ENCODE measurements at regions of chr10 and their contacts with region 1.

Region 1: DNA sequence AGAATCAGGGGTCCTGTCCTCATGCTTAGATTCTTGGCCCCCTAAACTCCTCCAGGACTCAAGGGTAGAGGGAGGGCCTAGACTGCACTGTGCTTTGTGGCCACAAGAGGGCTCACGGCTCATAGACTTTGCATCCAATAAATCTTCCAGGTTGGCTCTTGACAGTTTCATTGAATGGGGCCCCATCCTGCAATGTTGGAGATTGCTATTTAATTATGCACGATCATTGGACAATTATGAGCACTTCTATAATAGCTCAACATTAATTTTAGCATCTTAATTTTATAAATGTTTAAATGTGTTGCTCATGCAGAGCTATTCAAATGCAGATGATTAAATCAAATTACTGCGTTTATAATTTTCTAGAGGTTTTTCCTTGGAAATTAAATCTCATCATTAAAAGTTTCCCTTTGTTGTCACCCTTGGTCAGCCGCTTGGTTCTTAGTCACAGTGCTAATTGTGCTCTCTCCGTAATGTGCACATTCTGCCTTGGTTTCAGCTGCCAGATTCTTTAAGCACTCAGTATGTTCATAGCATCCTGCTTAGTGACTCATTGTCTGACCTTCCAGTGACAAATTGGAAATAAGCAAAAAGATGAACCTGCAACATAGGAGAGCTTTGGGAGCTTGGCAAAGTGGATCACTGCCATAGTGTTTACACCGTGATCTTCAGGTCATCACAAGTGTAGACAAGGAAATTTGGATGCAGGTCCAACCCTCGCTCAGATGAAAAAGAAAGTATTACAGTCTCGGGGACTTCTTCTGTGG is 33.4 kb upstream of the PLPP4 start:
- DNase-seq: peak; percentile 94
- H3K4me3 ChIP-seq: peak overlapping the region; percentile 55
- H3K27ac ChIP-seq: peak overlapping the region; percentile 78
- H3K4me1 ChIP-seq: peaks cover 36% of the 10 kb centered on the region
- H3K27me3 ChIP-seq: no peaks in the 10 kb centered on the region

Region 2: DNA sequence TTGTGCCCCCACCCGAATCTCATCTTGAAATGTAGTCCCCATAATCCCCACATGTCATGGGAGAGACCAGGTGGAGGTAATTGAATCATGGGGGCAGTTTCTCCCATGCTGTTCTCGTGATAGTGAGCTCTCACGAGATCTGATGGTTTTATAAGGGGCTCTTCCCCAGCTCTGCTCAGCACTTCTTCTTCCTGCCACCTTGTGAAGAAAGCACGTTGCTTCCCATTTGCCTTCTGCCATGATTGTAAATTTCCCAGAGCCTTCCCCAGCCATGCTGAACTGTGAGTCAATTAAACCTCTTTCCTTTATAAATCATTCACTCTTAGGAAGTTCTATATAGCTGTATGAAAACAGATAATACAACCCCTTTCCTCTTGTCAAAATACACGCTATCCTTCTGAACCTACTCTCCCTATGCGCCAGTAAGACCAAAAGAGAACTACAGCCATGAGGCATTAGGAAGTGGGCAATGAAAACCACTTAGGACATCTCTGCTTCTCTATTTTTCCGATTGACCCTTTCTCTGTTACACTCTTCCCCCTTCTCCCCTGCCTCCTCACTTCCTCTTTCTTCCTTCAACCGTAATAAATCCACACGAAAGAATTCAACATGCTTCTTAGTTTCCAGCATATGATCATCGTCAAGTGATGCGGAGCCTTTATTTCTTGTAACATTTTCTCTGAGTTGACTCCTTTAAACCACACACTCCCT is 326.4 kb after region 1 on chr10:
- in situ Hi-C with region 1: loop called (anchors 10 kb)
- DNase-seq: no peak
- H3K4me3 ChIP-seq: no peak overlapping the region
- H3K27ac ChIP-seq: no peak overlapping the region
- H3K4me1 ChIP-seq: no peaks in the 10 kb centered on the region
- H3K27me3 ChIP-seq: no peaks in the 10 kb centered on the region